Sciatic nerve (tissue), 2 donors: ENCODE measurements at regions of chr9 and their contacts with region 1.

Region 1: GRCh38 chr9:85964949-85965348 is 24.0 kb downstream of the NAA35 start:
- DNase-seq: no peak
- ATAC-seq: no peak

Region 2: GRCh38 chr9:84916769-84917168 is 1048.2 kb before region 1 on chr9:
- intact Hi-C with region 1: no loop called
- DNase-seq: no peak
- ATAC-seq: no peak

Region 3: GRCh38 chr9:85927076-85927475 is 37.9 kb before region 1 on chr9:
- intact Hi-C with region 1: no loop called
- DNase-seq: no peak
- ATAC-seq: peak; percentile 90

Region 4: DNA sequence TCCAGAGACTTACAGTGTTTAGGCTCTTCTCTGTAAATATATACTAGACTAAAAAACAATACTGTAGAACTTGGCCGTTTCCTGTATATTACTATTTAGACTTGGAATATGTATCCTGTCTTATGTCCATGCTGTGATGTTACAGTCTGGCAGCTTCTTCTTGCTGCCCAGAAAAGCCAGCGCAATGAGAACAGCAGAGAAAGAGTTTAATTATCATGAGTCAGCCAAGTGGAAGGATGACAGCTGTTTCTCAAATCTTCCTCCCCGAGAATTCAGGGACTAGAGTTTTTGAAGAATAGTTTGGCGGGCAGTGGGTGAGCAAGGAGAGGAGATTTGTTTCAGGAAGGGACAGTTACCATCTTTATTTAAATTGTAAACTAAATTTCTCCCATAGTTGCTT is 13.5 kb after region 1 on chr9:
- intact Hi-C with region 1: loop called (anchors 2 kb)
- DNase-seq: no peak
- ATAC-seq: no peak

Region 5: DNA sequence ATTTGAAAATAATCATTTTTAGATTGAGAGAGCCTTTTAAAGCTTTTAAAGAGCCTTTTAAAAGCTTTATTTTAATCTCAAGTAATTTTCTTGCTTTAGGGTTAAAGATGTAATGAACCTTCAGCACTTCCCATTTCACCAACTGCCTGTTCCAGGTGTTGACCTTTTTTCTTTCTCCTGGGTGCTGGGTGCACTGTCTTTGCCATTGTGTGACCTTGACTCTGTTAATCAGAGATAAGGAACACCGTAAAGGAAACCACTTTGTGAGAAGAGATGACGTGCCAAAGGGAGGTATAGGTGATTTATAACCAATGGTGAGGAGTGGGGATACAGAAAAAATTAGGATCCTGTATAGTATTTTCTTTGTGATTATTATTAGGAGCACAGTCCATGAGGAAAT is 44.2 kb after region 1 on chr9:
- intact Hi-C with region 1: no loop called
- DNase-seq: no peak
- ATAC-seq: no peak

Region 6: DNA sequence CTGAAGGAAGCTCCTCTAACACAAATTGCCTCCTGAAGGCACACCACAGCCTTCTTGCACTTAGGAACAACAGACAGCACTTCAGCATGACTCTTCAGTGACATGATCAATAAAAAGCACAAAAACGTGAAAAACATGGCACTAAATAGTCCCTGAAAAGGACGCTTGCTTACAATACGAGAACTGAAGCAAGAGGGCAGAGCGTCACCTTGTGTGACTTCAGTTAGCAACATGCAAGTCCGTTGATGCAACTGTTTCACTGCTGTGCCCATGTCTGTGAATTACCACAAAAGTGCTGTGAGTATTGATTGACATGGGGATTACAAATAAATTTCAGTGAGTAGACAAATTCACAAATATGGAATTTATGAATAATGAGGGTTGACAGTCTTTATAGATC is 1202.2 kb after region 1 on chr9:
- intact Hi-C with region 1: no loop called
- DNase-seq: no peak
- ATAC-seq: no peak